PC-3 (cell line): ENCODE measurements at regions of chr4 and their contacts with region 1.

Region 1: DNA sequence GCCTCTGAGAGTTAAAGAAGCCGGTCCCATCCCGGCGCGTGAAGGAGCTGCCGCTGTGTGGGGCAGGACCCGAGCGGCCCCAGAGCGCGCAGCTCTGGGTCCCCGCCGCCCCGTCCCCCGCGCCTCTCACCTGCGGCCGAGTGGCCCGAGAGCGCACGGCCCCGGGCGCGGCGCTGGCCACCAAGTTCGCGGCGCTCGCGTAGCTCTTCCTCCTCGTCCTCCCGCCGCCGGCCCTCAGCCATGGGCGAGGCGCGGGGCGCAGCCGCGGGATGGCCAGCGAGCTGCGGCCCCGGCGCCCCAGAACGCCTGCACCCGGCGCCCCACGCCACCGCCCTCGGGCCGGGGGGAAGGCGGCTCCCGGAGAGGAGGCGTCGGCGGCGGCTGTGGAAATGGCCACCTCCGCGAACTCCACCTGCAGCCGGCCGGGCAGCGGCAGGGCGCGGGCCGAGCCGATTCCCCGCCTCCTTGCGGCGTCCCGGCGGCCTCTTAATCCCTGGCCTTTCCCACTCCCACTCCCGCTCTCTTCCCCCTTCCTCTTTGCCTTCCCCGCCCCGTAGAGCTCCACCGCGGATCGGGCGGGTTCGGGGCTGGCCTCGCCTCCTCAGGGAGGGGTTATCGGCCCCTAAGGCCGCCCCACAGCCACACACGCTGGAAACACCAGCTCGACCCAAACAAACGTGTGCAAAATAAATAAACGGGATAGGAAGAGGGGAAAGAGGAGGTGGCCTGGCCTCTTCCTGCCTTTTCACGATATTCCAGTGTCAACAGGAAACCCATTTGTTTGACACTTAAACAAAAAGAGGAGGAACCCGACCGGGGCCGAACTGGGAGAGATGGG is at the start of gene SH3D19:
- DNase-seq: peak; percentile 85
- ATAC-seq: peak; percentile 79
- H3K4me3 ChIP-seq: peak within 1 kb of the TSS; percentile 71
- H3K27ac ChIP-seq: peak within 1 kb of the TSS; percentile 91
- H3K4me1 ChIP-seq: peaks cover 59% of the 10 kb centered on the region
- H3K27me3 ChIP-seq: no peaks in the 10 kb centered on the region
- CTCF ChIP-seq: no peak
- total RNA-seq, gene SH3D19: 30.1 and 31.1 TPM in 2 replicates

Region 2: DNA sequence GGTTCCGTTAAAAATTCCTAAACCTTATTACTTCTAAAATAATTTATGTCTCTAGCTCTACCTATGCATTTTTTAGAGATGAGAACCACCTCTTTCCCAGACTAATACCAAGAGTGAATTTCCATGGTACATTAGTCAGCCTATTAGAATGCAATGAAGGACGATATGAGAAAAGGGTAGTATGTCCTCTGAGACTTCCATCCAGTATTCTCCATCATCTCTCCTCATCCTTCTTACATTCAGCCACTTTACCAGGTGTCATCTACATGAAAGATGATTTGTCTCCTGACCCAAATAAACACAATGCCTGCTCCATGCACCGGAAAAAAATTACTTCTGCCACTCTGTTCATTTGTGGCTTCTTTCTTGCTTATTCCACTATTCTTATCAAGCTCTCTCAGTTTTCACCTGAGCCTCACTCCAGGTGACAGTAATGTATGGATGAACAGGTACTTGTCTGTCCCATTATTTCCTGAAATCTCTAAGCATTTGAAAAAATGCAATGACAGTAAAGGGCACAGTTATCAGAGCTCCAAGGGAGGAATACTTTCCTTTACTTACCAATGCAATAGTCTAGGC is 645.5 kb before region 1 on chr4:
- CTCF ChIA-PET with region 1: no interaction called
- POLR2A ChIA-PET with region 1: no interaction called
- intact Hi-C with region 1: no loop called
- DNase-seq: no peak
- ATAC-seq: no peak
- H3K4me3 ChIP-seq: no peak overlapping the region
- H3K27ac ChIP-seq: no peak overlapping the region
- H3K4me1 ChIP-seq: no peaks in the 10 kb centered on the region
- H3K27me3 ChIP-seq: no peaks in the 10 kb centered on the region
- CTCF ChIP-seq: no peak

Region 3: GRCh38 chr4:151260526-151260925 is 64.8 kb before region 1 on chr4:
- CTCF ChIA-PET with region 1: no interaction called
- POLR2A ChIA-PET with region 1: interaction called, 11 read pairs
- intact Hi-C with region 1: no loop called
- DNase-seq: peak; percentile 80
- ATAC-seq: peak; percentile 89
- H3K4me3 ChIP-seq: no peak overlapping the region
- H3K27ac ChIP-seq: peak overlapping the region; percentile 59
- H3K4me1 ChIP-seq: peaks cover 21% of the 10 kb centered on the region
- H3K27me3 ChIP-seq: no peaks in the 10 kb centered on the region
- CTCF ChIP-seq: no peak

Region 4: GRCh38 chr4:151291485-151291884 is 33.8 kb before region 1 on chr4:
- CTCF ChIA-PET with region 1: no interaction called
- POLR2A ChIA-PET with region 1: no interaction called
- intact Hi-C with region 1: loop called (anchors 5 kb)
- DNase-seq: peak; percentile 57
- ATAC-seq: peak; percentile 89
- H3K4me3 ChIP-seq: no peak overlapping the region
- H3K27ac ChIP-seq: peak overlapping the region; percentile 75
- H3K4me1 ChIP-seq: peaks cover 25% of the 10 kb centered on the region
- H3K27me3 ChIP-seq: no peaks in the 10 kb centered on the region
- CTCF ChIP-seq: no peak

Region 5: DNA sequence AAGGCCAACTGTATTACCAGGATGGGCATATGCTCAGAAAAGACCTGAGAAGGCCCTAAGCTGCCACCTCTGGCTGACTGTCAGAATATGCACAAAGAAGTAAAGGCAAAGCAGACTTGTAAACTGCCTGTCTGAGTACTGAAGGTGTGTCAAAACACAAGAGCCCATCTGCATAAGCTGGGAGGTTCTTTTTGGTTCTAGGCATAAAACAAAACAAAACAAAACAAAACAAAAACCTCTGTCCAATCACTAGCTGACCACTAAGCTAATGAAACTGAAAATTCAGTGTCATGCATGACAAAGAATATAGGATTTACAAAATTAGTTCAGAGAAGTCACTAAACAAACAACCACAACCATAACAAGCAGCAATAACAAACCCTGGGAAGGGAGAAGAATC is 20.6 kb before region 1 on chr4:
- CTCF ChIA-PET with region 1: interaction called, 5 read pairs
- POLR2A ChIA-PET with region 1: no interaction called
- intact Hi-C with region 1: loop called (anchors 2 kb)
- DNase-seq: peak; percentile 43
- ATAC-seq: peak; percentile 82
- H3K4me3 ChIP-seq: no peak overlapping the region
- H3K27ac ChIP-seq: peak overlapping the region; percentile 50
- H3K4me1 ChIP-seq: peaks cover 13% of the 10 kb centered on the region
- H3K27me3 ChIP-seq: no peaks in the 10 kb centered on the region
- CTCF ChIP-seq: no peak

Region 6: DNA sequence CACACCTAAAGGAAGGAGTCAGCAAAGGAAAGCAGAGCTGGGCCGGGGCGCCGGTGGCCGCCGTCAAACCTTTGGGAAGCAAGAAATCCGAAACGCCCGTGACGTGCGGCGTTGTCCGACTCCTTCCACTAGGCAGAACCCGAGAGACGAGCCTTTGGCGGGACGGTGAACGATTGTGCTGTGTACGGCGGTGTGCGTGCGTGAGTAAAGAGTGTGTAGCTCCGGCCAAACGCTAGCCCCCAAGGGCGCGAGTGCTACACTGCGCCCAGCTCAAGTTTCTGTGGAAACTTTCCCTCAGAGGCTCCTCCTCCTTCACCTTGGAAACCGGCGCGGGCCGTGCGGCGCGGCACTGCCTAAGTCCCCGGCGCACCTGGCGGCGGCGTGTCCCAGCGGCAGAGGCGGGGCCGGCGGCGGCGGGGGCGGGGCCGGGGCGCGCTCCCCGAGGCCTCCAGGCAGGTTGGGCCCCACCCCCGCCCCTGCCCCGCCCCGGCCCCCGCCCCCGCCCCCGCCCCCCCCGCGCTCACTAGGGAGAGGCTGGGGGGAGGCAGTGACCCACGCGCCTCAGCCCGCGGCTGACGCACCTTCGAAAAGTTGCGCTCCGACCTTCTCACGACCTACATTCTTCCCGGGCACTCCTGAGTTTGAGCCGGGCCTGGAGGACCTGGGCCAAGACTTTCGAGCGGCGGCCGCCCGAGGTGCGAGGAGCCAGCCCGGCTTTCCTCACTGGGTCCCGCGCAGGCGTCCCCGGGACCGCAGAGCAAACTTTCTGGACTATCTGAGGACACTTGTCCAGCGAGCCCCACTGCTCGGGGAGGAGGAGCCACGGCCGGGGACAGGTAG is 83.5 kb after region 1 on chr4 and contains the start of gene FHIP1A:
- CTCF ChIA-PET with region 1: no interaction called
- POLR2A ChIA-PET with region 1: no interaction called
- intact Hi-C with region 1: loop called (anchors 2 kb)
- DNase-seq: peak; percentile 96
- ATAC-seq: peak; percentile 92
- H3K4me3 ChIP-seq: peak within 1 kb of the TSS; percentile 97
- H3K27ac ChIP-seq: peak within 1 kb of the TSS; percentile 90
- H3K4me1 ChIP-seq: peaks cover 16% of the 10 kb centered on the region
- H3K27me3 ChIP-seq: no peaks in the 10 kb centered on the region
- CTCF ChIP-seq: no peak
- total RNA-seq, gene FHIP1A: 11.3 and 13.8 TPM in 2 replicates

Region 7: DNA sequence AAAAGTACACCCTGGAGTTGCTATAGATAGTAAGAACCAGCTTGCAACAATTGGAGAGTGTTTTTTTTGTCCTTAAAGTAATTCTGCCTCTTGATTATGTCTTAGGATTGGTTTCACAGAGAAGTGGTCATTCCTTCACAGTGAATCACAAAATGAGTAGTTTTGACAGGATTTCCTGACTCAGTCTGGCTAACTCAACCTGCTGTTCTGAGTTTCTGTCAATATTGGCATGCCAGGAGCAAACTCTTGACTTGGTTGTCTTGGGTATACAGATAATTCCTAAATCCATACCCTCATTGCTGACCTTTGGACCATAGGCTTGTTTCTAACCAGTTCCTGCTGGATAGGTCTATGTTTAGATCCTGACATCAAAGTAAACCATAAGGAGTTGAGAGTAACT is 93.1 kb after region 1 on chr4:
- CTCF ChIA-PET with region 1: no interaction called
- POLR2A ChIA-PET with region 1: interaction called, 13 read pairs
- intact Hi-C with region 1: no loop called
- DNase-seq: peak; percentile 91
- ATAC-seq: peak; percentile 90
- H3K4me3 ChIP-seq: no peak overlapping the region; the same call in 1 of the 2 replicates
- H3K27ac ChIP-seq: peak overlapping the region; percentile 93
- H3K4me1 ChIP-seq: peaks cover 56% of the 10 kb centered on the region
- H3K27me3 ChIP-seq: no peaks in the 10 kb centered on the region
- CTCF ChIP-seq: no peak

Region 8: GRCh38 chr4:151567056-151567455 is 241.7 kb after region 1 on chr4:
- CTCF ChIA-PET with region 1: no interaction called
- POLR2A ChIA-PET with region 1: no interaction called
- intact Hi-C with region 1: no loop called
- DNase-seq: no peak
- ATAC-seq: peak; percentile 40
- H3K4me3 ChIP-seq: no peak overlapping the region
- H3K27ac ChIP-seq: no peak overlapping the region
- H3K4me1 ChIP-seq: no peaks in the 10 kb centered on the region
- H3K27me3 ChIP-seq: no peaks in the 10 kb centered on the region
- CTCF ChIP-seq: no peak

Region 9: GRCh38 chr4:152515678-152516077 is 1190.3 kb after region 1 on chr4:
- CTCF ChIA-PET with region 1: no interaction called
- POLR2A ChIA-PET with region 1: no interaction called
- intact Hi-C with region 1: no loop called
- DNase-seq: peak; percentile 53
- ATAC-seq: peak; percentile 61
- H3K4me3 ChIP-seq: no peak overlapping the region
- H3K27ac ChIP-seq: peak overlapping the region; percentile 34; the same call in 1 of the 2 replicates
- H3K4me1 ChIP-seq: peaks cover 14% of the 10 kb centered on the region
- H3K27me3 ChIP-seq: no peaks in the 10 kb centered on the region
- CTCF ChIP-seq: no peak